Ovary (tissue), 10 donors: ENCODE measurements at regions of chr13 and their contacts with region 1.

Region 1: DNA sequence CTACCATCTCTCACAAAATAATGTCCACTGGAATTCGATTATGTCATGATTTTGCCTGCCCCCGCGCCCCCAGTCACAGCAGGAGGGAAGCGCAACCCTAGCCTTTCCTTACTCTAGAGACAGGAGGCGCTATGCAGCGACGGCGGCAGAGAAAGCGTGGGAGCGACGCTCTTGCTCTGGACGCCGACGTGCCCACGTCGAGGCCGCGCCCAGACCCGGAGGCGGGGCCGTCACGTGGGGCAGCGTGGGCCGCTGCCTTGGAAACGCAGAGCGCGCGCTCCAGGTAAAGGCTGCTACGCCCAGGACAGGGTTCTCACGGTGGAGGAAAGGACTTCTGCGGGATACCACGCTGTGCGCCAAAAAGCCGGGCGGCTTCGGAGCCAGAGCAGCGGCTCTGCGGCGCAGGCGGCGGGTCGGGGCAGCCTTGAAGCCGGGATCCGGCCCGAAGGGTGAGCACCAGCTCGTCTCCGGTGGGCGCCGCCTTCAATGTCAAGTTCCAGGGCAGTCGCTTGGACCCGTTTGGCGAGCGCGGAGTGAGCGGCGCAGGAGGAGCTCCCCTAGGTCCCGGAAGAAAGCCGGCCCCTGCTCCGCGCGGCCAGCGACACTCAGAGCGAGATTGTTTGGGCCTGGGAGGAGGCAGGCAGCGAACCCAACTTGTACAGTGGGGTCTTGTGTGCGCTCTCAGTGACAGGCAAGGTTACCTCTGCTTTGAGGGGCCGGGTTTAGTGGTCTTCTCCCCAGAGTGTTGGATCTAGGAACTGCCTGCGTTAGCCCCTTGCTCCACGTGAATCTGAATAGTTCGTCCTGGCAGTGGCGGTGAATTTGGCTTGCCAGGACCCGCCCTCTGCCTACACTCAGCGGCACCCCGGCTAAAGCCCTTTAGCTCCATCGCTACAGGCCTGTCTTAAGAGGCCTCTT is 121.7 kb downstream of the MRPL57 start:
- DNase-seq: peak; percentile 78 to 89 (median 83)
- H3K4me3 ChIP-seq: peak overlapping the region; percentile 66
- H3K27ac ChIP-seq: peak overlapping the region; percentile 42 to 63
- H3K4me1 ChIP-seq: peaks cover 2% of the 10 kb centered on the region
- H3K27me3 ChIP-seq: no peaks in the 10 kb centered on the region
- CTCF ChIP-seq: peak; percentile 90 to 94 (median 92)
- EP300 ChIP-seq: no peak
- POLR2A ChIP-seq: no peak

Region 2: GRCh38 chr13:21463424-21463823 is 165.3 kb after region 1 on chr13:
- intact Hi-C with region 1: loop called in 1 of 4 experiments (anchors 5 kb)
- DNase-seq: no peak
- H3K4me3 ChIP-seq: no peak overlapping the region
- H3K27ac ChIP-seq: no peak overlapping the region
- H3K4me1 ChIP-seq: no peaks in the 10 kb centered on the region
- H3K27me3 ChIP-seq: no peaks in the 10 kb centered on the region
- CTCF ChIP-seq: no peak
- EP300 ChIP-seq: no peak
- POLR2A ChIP-seq: no peak

Region 3: DNA sequence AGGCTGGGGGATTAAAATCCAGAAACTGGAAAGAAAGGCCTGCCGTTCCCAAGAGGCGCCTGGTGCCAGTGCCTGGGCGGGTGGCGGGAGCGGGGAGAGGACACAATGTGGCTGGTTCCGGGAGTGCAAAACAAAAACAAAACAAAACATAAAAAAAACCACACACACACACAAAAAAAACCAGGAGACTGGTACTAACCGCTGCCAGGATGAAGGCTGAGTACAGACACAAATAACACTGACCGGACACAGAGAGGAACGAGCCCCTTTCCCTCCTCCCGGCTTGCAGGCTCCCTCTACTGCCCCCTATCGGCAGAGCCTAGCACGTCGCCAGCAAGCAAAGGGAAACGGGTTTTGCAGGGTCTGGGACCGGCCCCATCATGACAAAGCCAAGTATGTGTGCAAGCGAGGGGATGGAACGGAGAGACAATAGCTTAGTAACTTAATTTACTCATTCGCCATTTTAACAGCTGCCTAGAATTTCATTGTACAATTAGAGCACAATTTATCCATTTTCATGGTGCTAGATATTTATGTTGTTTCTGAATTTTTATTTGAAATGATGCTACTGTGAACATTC is 178.8 kb after region 1 on chr13:
- intact Hi-C with region 1: loop called (anchors 5 to 10 kb)
- DNase-seq: peak; percentile 56 to 79 (median 75)
- H3K4me3 ChIP-seq: peak overlapping the region; percentile 29
- H3K27ac ChIP-seq: no peak overlapping the region
- H3K4me1 ChIP-seq: peaks cover 2% of the 10 kb centered on the region
- H3K27me3 ChIP-seq: no peaks in the 10 kb centered on the region
- CTCF ChIP-seq: peak; percentile 56 to 71 (median 61)
- EP300 ChIP-seq: no peak
- POLR2A ChIP-seq: no peak